ENCODE measurements at regions of chr3 and their contacts with region 1.

Region 1: GRCh38 chr3:150885535-150885934 is 19.7 kb downstream of the MINDY4B start:
- DNase-seq: no peak
- ATAC-seq: no peak
- H3K4me3 ChIP-seq: no peak overlapping the region
- H3K4me3 Mint-ChIP-seq: no peak overlapping the region
- H3K27ac ChIP-seq: no peak overlapping the region
- H3K27ac Mint-ChIP-seq: no peak overlapping the region
- H3K4me1 ChIP-seq: no peaks in the 10 kb centered on the region
- H3K4me1 Mint-ChIP-seq: no peaks in the 10 kb centered on the region
- H3K27me3 ChIP-seq: peaks cover 0 to 9% of the 10 kb centered on the region in 2 experiments
- H3K27me3 Mint-ChIP-seq: peaks cover 12 to 26% of the 10 kb centered on the region in 2 donors

Region 2: DNA sequence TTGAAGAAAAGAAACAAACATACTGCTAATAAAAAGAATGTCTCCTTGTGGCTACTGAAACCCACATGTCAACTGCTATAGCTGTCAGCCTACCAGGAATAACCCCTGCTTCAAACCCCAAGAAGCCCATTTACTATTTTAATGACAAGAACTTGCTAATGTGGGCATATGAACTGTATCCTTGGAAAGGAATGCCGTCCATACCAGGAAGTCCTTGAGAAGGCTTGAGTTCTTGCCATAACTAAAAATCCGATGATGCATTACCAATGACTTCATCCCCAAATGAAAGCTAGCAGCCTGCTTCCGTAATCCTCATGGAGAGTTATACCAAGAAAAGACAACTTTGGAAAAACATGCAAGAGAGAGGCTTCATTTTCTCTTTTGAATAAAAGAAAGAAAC is 15.1 kb before region 1 on chr3:
- CTCF ChIA-PET with region 1: no interaction called
- POLR2A ChIA-PET with region 1: interaction called in 1 of 2 experiments, 10 read pairs
- DNase-seq: no peak
- ATAC-seq: no peak
- H3K4me3 ChIP-seq: no peak overlapping the region
- H3K4me3 Mint-ChIP-seq: no peak overlapping the region
- H3K27ac ChIP-seq: no peak overlapping the region
- H3K27ac Mint-ChIP-seq: no peak overlapping the region
- H3K4me1 ChIP-seq: no peaks in the 10 kb centered on the region
- H3K4me1 Mint-ChIP-seq: peaks cover 0 to 3% (median under 1%) of the 10 kb centered on the region in 3 donors
- H3K27me3 ChIP-seq: no peaks in the 10 kb centered on the region
- H3K27me3 Mint-ChIP-seq: peaks cover 12% of the 10 kb centered on the region in 2 donors

Region 3: DNA sequence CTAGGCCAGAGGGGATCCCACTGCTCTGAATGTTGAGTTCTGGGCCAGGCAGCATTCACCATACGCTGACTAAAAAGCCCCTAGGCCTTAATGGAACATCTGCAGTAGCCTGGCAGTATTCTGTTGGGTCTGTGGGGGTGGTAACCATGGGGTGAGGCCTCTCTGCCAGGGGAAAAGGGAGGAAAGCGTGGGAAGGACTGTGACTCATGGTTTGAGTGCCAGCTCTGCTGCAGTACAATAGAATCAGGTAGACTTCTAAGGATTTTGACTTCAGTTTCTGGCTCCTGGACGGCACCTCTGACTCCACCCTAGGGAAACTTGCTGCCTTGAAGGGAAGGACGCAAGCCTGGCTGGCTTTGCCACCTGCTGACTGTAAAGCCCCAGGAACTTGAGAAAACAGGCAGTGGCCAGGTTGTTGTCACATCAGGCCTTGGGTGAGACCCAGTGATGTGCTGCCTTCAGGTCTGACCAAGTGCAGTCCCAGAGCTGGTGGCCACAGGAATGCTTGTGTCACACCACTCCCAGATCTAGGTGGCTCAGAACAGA is 1136.5 kb after region 1 on chr3:
- CTCF ChIA-PET with region 1: no interaction called
- POLR2A ChIA-PET with region 1: no interaction called
- DNase-seq: no peak
- ATAC-seq: no peak
- H3K4me3 ChIP-seq: no peak overlapping the region
- H3K4me3 Mint-ChIP-seq: no peak overlapping the region
- H3K27ac ChIP-seq: no peak overlapping the region
- H3K27ac Mint-ChIP-seq: no peak overlapping the region
- H3K4me1 ChIP-seq: no peaks in the 10 kb centered on the region
- H3K4me1 Mint-ChIP-seq: peaks cover 0 to 4% (median 0%) of the 10 kb centered on the region in 3 donors
- H3K27me3 ChIP-seq: peaks cover 0 to 3% of the 10 kb centered on the region in 2 experiments
- H3K27me3 Mint-ChIP-seq: peaks cover 4 to 12% of the 10 kb centered on the region in 2 donors

Measured in T-cell (primary cell).